Activated B cell treated with CpG ODN at 0.5 μM for 24 hours (primary cell): ENCODE measurements at regions of chr1 and their contacts with region 1.

Region 1: DNA sequence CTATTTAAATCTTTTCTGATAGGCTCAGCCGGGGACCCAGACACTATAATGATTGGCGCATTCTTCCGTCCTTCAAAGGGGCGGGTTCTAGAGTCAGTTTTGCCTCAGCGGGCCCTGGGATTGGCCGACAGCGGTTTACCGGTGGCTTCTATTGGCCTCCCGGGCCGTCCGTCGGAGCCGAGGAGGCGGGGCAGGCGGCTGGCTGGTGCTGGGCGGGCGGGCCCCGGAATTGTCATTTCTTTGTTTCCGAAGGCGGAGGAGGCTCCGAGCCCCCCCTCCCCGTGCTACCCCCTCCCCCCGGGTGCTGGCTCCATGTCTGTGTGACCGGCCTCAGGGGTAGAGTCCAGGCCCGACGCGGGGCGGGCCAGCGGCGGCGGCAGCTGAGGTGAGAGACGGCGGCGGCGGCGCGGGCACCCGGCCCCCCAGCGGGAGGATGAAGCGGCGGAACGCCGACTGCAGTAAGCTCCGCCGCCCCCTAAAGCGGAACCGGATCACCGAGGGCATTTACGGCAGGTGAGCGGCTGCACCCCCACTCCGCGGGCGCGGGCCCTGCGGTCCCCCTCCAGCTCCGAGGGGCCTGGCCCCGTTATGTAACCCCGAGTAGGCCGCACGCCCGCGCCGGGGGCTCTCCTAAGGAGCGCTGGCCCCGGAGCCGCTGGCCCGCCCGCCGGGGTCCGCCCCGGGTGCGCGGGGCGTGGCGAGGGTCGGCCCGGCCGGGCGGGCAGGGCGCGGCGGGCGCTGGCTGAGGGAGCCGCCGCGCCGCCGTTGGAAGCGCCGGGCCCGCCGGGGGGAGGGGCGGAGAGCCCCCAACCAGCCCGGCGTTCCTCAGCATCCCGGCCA is at the start of gene MACO1:
- DNase-seq: peak; percentile 96
- ATAC-seq: peak; percentile 86
- H3K4me3 Mint-ChIP-seq: peak within 1 kb of the TSS; percentile 97
- H3K27ac Mint-ChIP-seq: peak within 1 kb of the TSS; percentile 99
- H3K4me1 Mint-ChIP-seq: peaks cover 50% of the 10 kb centered on the region
- H3K27me3 Mint-ChIP-seq: no peaks in the 10 kb centered on the region
- CTCF ChIP-seq: no peak
- total RNA-seq, gene MACO1: 17.1 and 19.7 TPM in 2 replicates

Region 2: DNA sequence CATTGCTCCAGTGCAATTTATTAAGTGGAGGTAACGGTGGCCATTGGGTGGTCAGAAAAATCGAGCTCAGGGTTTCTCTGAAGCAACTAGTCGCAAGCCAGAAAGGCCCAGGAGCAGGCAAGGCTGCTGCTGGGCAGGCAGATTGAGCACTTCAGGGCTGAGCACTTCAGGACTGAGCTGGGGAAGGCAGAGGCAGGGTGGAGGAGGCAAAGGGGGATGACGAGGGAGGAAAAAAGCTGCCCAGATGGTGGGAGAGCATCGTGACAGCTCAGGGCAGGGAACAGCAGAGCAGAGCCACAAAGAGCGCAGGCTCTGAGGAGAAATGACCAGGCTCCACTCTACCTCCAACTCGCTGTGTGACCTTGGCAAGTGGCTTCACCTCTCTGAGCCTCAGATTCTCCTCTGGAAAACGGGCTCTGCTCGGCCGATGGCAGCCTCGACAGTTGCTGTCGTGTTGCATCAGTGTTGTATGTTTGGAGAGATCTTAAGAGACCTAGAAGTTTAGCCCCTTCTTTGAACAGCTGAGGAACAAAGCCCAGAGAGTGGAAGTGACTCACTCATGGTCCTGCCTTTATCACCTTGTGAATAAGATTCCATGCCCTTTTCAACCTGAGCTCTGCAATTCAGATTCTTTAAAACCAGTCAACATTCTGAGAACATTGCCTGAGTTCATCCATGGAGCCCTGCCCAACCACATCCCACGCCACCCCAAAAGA is 340.0 kb before region 1 on chr1:
- CTCF ChIA-PET with region 1: no interaction called
- POLR2A ChIA-PET with region 1: no interaction called
- intact Hi-C with region 1: no loop called
- DNase-seq: no peak
- ATAC-seq: no peak
- H3K4me3 Mint-ChIP-seq: no peak overlapping the region
- H3K27ac Mint-ChIP-seq: no peak overlapping the region
- H3K4me1 Mint-ChIP-seq: peaks cover 15% of the 10 kb centered on the region
- H3K27me3 Mint-ChIP-seq: no peaks in the 10 kb centered on the region
- CTCF ChIP-seq: no peak

Region 3: DNA sequence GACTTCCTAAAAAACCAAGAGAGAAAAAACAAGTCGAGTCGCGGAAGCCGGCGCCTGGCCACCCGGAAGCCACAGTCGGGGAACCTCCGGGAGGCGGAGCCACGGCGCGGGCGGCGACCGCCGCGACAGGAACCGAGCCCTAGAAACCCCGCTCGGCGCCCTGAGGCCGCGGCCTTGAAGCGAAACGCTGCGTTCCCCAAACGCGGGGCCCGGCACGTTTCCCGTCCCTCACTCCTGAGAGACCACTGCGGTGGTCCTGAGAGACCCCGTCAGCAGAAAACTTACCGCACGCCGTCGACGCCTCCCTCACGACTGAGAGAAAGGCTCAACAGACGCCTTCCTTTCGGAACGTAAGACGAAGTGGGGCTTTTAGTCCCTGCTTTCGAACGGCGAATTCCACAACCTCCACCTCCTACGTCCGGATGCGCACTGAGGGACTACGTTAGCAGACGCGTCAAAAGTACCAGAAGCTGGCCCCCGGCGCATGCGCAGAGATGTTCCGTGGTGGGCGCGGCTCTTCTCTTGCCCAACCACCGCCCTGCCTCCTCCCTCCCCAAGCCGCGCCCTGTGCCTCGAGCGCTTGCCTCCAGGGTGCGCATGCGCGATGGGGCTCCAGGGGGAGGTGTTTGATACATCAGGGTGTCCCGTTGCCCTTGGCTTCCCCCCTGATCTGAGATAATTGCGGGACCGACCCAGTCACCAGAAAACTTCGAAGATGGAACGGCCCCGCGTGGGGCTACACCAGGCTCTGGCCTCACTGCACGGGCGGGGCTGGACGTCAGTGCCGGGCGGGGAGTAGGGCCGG is 183.7 kb before region 1 on chr1 and contains the start of gene RSRP1:
- CTCF ChIA-PET with region 1: no interaction called
- POLR2A ChIA-PET with region 1: interaction called, 12 read pairs
- intact Hi-C with region 1: loop called (anchors 1 kb)
- DNase-seq: peak; percentile 98
- ATAC-seq: peak; percentile 87
- H3K4me3 Mint-ChIP-seq: peak within 1 kb of the TSS; percentile 97
- H3K27ac Mint-ChIP-seq: peak within 1 kb of the TSS; percentile 99
- H3K4me1 Mint-ChIP-seq: peaks cover 45% of the 10 kb centered on the region
- H3K27me3 Mint-ChIP-seq: no peaks in the 10 kb centered on the region
- CTCF ChIP-seq: no peak
- total RNA-seq, gene RSRP1: 179 and 222 TPM in 2 replicates

Region 4: GRCh38 chr1:25472471-25472870 is 41.6 kb after region 1 on chr1:
- CTCF ChIA-PET with region 1: interaction called, 3 read pairs
- POLR2A ChIA-PET with region 1: no interaction called
- intact Hi-C with region 1: loop called (anchors 5 kb)
- DNase-seq: no peak
- ATAC-seq: no peak
- H3K4me3 Mint-ChIP-seq: no peak overlapping the region
- H3K27ac Mint-ChIP-seq: peak overlapping the region; percentile 37
- H3K4me1 Mint-ChIP-seq: peaks cover 34% of the 10 kb centered on the region
- H3K27me3 Mint-ChIP-seq: no peaks in the 10 kb centered on the region
- CTCF ChIP-seq: no peak

Region 5: GRCh38 chr1:25538191-25538761 is 107.4 kb after region 1 on chr1:
- CTCF ChIA-PET with region 1: no interaction called
- POLR2A ChIA-PET with region 1: no interaction called
- intact Hi-C with region 1: no loop called
- DNase-seq: no peak
- ATAC-seq: no peak
- H3K4me3 Mint-ChIP-seq: no peak overlapping the region
- H3K27ac Mint-ChIP-seq: no peak overlapping the region
- H3K4me1 Mint-ChIP-seq: peaks cover 7% of the 10 kb centered on the region
- H3K27me3 Mint-ChIP-seq: peaks cover 4% of the 10 kb centered on the region
- CTCF ChIP-seq: no peak

Region 6: DNA sequence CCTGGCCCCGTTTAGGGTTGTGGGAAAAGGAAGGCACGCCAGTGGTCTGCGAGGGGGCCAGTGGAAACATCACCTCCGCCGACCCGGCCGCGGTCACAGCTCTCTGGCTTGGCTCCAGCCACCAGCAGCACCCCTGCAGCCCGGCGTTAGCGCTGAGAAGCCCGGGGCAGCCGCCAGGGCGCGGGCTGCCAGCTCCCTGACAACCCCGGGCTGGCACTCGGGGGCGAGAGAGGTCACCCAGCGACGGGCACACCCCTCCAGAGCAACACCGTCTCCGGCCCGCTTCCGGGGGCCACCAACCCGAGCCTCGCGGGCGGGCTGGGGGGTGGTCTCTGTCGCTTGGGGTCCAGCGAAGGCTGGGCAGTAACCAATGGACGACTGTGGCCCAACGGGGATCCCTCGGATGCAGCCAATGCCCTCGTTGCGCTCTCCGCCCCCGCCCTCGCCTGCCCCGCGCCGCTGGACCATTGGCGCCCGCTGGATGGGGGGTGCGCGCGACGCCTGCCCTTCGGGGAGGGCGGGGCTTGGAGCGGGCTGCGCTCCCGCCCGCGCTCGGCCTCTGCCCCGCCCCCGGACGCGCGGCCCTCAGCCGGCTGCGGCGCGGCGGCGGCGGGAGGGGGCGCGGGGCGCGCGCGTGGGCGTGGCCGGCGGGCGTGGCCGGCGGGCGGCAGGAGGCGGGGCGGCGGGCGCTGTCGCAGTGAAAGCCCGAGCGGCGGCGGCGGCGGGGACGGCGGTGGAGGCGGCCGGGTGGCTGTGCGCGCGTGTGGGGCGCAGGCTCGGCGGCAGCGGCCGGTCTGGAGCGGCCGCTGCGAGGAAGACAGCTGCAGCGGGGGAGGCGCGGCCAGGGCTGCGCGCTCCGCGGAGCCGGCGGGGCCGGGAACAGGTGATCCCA is 185.5 kb after region 1 on chr1 and contains the start of gene MAN1C1:
- CTCF ChIA-PET with region 1: no interaction called
- POLR2A ChIA-PET with region 1: no interaction called
- intact Hi-C with region 1: loop called (anchors 5 kb)
- DNase-seq: peak; percentile 88
- ATAC-seq: peak; percentile 93
- H3K4me3 Mint-ChIP-seq: peak within 1 kb of the TSS; percentile 69
- H3K27ac Mint-ChIP-seq: no peak within 1 kb of the TSS
- H3K4me1 Mint-ChIP-seq: peaks cover 25% of the 10 kb centered on the region
- H3K27me3 Mint-ChIP-seq: peaks cover 34% of the 10 kb centered on the region
- CTCF ChIP-seq: no peak
- total RNA-seq, gene MAN1C1: 0.20 and 0.34 TPM in 2 replicates

Region 7: GRCh38 chr1:25737130-25737529 is 306.2 kb after region 1 on chr1:
- CTCF ChIA-PET with region 1: no interaction called
- POLR2A ChIA-PET with region 1: no interaction called
- intact Hi-C with region 1: no loop called
- DNase-seq: no peak
- ATAC-seq: no peak
- H3K4me3 Mint-ChIP-seq: no peak overlapping the region
- H3K27ac Mint-ChIP-seq: no peak overlapping the region
- H3K4me1 Mint-ChIP-seq: no peaks in the 10 kb centered on the region
- H3K27me3 Mint-ChIP-seq: peaks cover 18% of the 10 kb centered on the region
- CTCF ChIP-seq: no peak

Region 8: GRCh38 chr1:25997828-25998761 is 567.2 kb after region 1 on chr1 and contains the start of gene PAFAH2:
- CTCF ChIA-PET with region 1: no interaction called
- POLR2A ChIA-PET with region 1: no interaction called
- intact Hi-C with region 1: loop called (anchors 1 kb)
- DNase-seq: peak; percentile 85
- ATAC-seq: peak; percentile 98
- H3K4me3 Mint-ChIP-seq: peak within 1 kb of the TSS; percentile 95
- H3K27ac Mint-ChIP-seq: peak within 1 kb of the TSS; percentile 95
- H3K4me1 Mint-ChIP-seq: peaks cover 18% of the 10 kb centered on the region
- H3K27me3 Mint-ChIP-seq: no peaks in the 10 kb centered on the region
- CTCF ChIP-seq: peak; percentile 89
- total RNA-seq, gene PAFAH2: 5.4 and 9.2 TPM in 2 replicates